HEK293T (cell line): ENCODE measurements at regions of chr7 and their contacts with region 1.

Region 1: GRCh38 chr7:149624419-149625339 is 127.1 kb upstream of the ZNF746 start:
- DNase-seq: peak; percentile 97

Region 2: GRCh38 chr7:149474309-149475114 is 150.2 kb before region 1 on chr7:
- CTCF ChIA-PET with region 1: no interaction called
- POLR2A ChIA-PET with region 1: no interaction called
- DNase-seq: no peak

Region 3: GRCh38 chr7:149635561-149636329 is 11.1 kb after region 1 on chr7:
- CTCF ChIA-PET with region 1: interaction called, 10 read pairs
- POLR2A ChIA-PET with region 1: interaction called, 36 read pairs
- DNase-seq: peak; percentile 43

Region 4: DNA sequence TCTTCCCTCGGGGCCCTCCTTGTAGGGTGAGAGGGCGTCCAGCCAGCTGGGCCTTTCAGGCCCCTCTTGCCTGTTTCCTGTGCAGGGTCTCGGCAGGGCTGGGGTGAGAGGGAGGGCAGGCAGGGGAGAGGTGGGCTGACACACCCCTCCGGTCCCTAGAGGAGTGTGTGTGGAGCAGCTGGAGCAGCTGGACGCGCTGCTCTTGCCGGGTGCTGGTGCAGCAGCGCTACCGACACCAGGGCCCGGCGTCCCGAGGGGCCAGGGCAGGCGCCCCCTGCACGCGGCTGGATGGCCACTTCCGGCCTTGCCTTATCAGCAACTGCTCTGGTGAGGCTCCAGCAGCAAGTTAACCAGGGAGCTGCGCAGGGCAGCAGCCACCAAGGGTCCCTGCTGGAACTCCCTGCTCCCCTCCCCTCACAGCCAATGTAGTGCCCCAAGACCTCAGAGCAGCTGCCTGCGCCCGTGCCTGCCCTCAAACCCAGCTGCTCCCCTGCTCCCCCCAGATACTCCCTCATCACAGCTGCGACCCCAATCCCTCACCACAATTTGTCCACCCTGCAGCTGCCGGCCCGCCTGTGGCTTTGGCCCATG is 197.8 kb after region 1 on chr7:
- CTCF ChIA-PET with region 1: no interaction called
- POLR2A ChIA-PET with region 1: no interaction called
- DNase-seq: no peak